ENCODE measurements at regions of chr4 and their contacts with region 1.

Region 1: DNA sequence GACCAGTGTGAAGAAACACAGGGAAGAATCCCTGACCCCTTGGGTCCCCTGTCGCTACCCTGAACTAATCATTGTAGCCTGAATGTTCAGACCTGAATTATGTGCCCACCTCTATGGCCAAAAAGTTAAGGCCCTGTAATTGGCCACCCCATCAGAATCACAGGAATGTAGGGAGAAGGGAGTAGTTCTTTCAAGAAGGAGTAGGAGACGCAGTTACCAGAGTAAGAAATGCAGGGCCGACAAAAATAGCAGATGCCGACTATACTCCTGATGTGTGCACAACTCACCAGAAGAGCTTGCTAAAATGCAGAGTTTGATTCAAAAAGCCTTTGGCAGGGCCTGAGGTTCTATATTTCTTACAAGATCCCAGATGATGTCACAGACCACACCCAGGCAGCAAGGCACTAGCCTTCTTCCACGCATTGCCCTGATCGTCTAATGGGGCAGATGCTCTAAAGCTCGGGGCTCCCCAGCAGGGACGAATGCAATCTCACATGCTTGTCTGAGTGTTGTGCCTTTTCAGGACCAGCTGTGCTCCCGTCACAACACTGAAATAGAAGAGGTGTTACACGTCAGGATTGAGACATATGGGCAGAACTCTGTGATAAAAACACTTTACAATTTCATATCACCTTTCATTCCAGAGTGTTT is 161.0 kb upstream of the FAM241A start:
- DNase-seq: no peak
- H3K4me3 ChIP-seq: no peak overlapping the region
- H3K27ac ChIP-seq: no peak overlapping the region
- H3K4me1 ChIP-seq: no peaks in the 10 kb centered on the region
- H3K27me3 ChIP-seq: no peaks in the 10 kb centered on the region
- CTCF ChIP-seq: no peak

Region 2: GRCh38 chr4:111494971-111495370 is 489.3 kb before region 1 on chr4:
- intact Hi-C with region 1: no loop called
- DNase-seq: no peak
- H3K4me3 ChIP-seq: no peak overlapping the region
- H3K27ac ChIP-seq: no peak overlapping the region
- H3K4me1 ChIP-seq: no peaks in the 10 kb centered on the region
- H3K27me3 ChIP-seq: no peaks in the 10 kb centered on the region
- CTCF ChIP-seq: no peak

Region 3: DNA sequence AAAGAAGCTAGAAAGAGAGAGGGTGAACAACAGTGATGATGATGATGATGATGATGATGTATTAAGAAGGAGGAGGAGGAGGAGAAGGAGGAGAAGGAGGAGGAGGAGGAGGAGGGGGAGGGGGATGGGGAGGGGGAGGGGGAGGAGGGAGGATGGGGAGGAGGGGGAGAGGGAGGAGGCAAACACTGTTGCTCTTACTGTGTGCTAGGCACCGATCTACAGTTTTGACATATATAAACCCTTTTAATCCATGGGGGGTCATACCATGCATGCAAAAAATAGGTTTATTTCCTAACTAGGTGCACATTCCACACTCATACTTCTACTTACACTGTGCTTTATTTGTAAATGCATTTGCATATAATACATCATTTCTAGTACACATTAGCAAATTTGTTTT is 321.8 kb before region 1 on chr4:
- intact Hi-C with region 1: no loop called
- DNase-seq: no peak
- H3K4me3 ChIP-seq: no peak overlapping the region
- H3K27ac ChIP-seq: no peak overlapping the region
- H3K4me1 ChIP-seq: no peaks in the 10 kb centered on the region
- H3K27me3 ChIP-seq: no peaks in the 10 kb centered on the region
- CTCF ChIP-seq: no peak

Region 4: DNA sequence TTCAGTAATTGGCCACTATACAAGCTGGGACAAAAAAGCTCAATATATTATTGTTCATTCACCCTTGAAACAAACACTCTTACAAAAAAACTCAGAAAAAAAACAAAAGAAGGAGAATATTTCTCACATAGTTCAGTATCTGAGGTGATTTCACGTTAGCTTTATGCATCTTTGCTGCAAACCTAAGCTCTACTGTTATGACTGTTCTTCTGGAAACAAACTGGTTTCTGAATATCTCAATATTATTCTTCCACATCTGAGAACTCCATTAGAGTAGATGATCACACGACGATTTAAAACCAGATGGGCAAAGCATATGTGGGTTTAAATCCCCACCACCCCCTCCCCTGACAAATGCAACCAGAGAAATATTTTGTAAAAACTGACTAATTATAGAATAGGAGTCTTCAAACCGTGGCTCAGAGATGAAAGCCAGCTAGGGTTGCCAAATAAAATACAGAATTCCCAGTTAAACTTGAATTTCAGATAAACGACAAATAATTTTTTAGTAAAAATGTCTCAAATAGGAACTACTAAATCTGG is 21.1 kb before region 1 on chr4:
- intact Hi-C with region 1: loop called (anchors 2 kb)
- DNase-seq: no peak
- H3K4me3 ChIP-seq: no peak overlapping the region
- H3K27ac ChIP-seq: no peak overlapping the region
- H3K4me1 ChIP-seq: no peaks in the 10 kb centered on the region
- H3K27me3 ChIP-seq: no peaks in the 10 kb centered on the region
- CTCF ChIP-seq: no peak

Measured in tibial artery (tissue), 4 donors.